Activated CD4-positive, alpha-beta T cell treated with anti-CD3 and anti-CD28 coated beads for 36 hours (primary cell): ENCODE measurements at regions of chr13 and their contacts with region 1.

Region 1: GRCh38 chr13:22929381-22930126 is 251.2 kb upstream of the SGCG start:
- DNase-seq: no peak
- ATAC-seq: no peak
- H3K4me3 Mint-ChIP-seq: no peak overlapping the region
- H3K27ac Mint-ChIP-seq: no peak overlapping the region
- H3K4me1 Mint-ChIP-seq: peaks cover 8% of the 10 kb centered on the region
- H3K27me3 Mint-ChIP-seq: peaks cover 29% of the 10 kb centered on the region

Region 2: GRCh38 chr13:24353736-24354135 is 1424.2 kb after region 1 on chr13:
- CTCF ChIA-PET with region 1: no interaction called
- POLR2A ChIA-PET with region 1: no interaction called
- intact Hi-C with region 1: loop called in 1 of 2 experiments (anchors 5 kb)
- DNase-seq: no peak
- ATAC-seq: no peak
- H3K4me3 Mint-ChIP-seq: no peak overlapping the region
- H3K27ac Mint-ChIP-seq: no peak overlapping the region
- H3K4me1 Mint-ChIP-seq: no peaks in the 10 kb centered on the region
- H3K27me3 Mint-ChIP-seq: no peaks in the 10 kb centered on the region